Activated CD4-positive, alpha-beta T cell treated with anti-CD3 and anti-CD28 coated beads, Interleukin-2, amount 10 ng/mL, durations not matched to agents 24 days and 14 days (primary cell): ENCODE measurements at regions of chr3 and their contacts with region 1.

Region 1: GRCh38 chr3:106215047-106215446 is 346.2 kb upstream of the CBLB start:
- DNase-seq: peak; percentile 64
- H3K4me3 Mint-ChIP-seq: peak overlapping the region; percentile 3
- H3K27ac Mint-ChIP-seq: peak overlapping the region; percentile 70
- H3K4me1 Mint-ChIP-seq: peaks cover 32% of the 10 kb centered on the region
- H3K27me3 Mint-ChIP-seq: no peaks in the 10 kb centered on the region

Region 2: DNA sequence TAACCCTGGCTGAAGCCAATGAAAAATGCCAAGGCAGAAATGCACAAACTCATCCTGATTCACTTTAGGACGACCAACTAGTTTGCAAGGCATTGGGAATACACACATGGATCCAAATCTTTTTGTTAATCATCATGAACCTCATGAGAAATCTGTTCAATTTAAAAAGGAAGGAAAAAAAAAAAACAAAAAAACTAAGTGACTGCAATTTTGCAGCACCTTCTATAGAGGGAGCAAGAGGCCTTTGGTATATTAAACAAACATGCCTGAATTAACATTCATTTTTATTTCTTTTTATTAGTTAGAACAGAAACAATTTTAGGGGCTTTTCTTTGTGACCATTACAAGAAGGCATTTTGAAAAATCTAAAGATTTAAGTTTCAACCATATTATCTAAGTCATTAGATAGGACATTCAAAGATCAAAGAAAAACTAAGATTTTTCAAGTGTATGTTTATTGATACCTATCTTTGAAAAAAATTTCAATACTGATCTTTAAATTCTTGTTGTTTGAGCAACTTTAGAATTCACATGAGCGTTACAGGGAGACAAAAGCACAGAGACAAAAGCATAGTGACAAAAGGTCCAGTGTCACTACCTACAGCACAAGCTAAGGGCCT is 528.7 kb before region 1 on chr3:
- intact Hi-C with region 1: loop called (anchors 2 kb)
- DNase-seq: peak; percentile 53
- H3K4me3 Mint-ChIP-seq: no peak overlapping the region
- H3K27ac Mint-ChIP-seq: peak overlapping the region; percentile 67
- H3K4me1 Mint-ChIP-seq: peaks cover 18% of the 10 kb centered on the region
- H3K27me3 Mint-ChIP-seq: no peaks in the 10 kb centered on the region

Region 3: GRCh38 chr3:106182950-106183511 is 32.0 kb before region 1 on chr3:
- intact Hi-C with region 1: no loop called
- DNase-seq: no peak
- H3K4me3 Mint-ChIP-seq: no peak overlapping the region
- H3K27ac Mint-ChIP-seq: no peak overlapping the region
- H3K4me1 Mint-ChIP-seq: peaks cover 46% of the 10 kb centered on the region
- H3K27me3 Mint-ChIP-seq: no peaks in the 10 kb centered on the region

Region 4: DNA sequence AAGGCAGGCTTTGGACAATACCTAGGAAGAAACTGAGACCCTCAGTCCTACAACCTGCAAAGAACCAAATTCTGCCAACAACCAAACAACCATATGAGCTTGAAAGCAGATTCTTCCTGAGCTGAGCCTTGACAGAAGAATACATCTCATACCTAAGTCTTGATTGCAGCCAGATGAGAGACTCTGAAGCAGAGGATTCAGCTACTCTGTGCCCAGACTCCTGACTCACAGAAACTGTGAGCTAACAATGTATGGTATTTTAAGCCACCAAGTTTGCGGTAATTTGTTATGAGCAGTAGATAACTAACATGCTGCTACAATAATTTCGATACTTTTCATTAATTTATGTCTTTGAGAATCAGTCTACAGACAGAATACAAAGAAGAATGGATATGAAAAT is 21.2 kb before region 1 on chr3:
- intact Hi-C with region 1: no loop called
- DNase-seq: no peak
- H3K4me3 Mint-ChIP-seq: no peak overlapping the region
- H3K27ac Mint-ChIP-seq: no peak overlapping the region
- H3K4me1 Mint-ChIP-seq: peaks cover 20% of the 10 kb centered on the region
- H3K27me3 Mint-ChIP-seq: no peaks in the 10 kb centered on the region

Region 5: GRCh38 chr3:106232956-106233355 is 17.9 kb after region 1 on chr3:
- intact Hi-C with region 1: loop called (anchors 2 kb)
- DNase-seq: no peak
- H3K4me3 Mint-ChIP-seq: no peak overlapping the region
- H3K27ac Mint-ChIP-seq: no peak overlapping the region
- H3K4me1 Mint-ChIP-seq: peaks cover 42% of the 10 kb centered on the region
- H3K27me3 Mint-ChIP-seq: no peaks in the 10 kb centered on the region

Region 6: DNA sequence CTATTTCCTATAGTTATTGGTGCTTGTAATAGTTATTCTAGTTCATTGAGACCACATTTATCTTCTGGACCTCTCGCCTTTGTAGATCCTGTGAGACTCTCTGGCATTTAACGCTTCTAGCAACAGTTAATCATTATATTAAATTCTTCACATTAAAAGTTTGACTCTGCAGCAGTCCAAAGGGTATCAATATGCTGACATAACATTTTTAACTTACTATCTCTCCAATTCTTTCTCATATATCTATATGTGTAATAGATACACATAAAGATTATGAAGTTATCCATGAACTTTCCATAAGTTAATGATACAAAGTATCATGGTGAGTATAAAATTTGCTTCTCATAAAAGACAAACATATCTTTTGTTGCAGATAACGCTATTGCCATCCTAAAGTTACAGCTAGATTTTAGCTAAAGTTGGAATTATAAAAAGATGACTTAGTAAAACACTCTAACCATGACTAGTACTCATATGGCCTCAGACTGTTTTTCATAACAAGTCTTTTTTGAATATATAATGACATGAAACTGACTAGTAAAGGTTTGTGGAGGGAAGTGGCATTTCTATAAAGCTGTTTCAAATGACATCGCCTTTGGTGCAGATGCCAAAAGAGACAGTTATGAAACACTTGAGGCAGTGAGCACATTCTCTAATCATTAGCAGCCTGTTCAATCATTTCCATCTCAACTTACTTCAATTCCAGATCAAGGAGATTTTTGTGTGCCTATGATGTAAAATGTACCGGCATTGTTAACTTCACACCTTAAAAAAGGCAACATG is 33.0 kb after region 1 on chr3:
- intact Hi-C with region 1: loop called (anchors 5 kb)
- DNase-seq: no peak
- H3K4me3 Mint-ChIP-seq: no peak overlapping the region
- H3K27ac Mint-ChIP-seq: peak overlapping the region; percentile 32
- H3K4me1 Mint-ChIP-seq: peaks cover 16% of the 10 kb centered on the region
- H3K27me3 Mint-ChIP-seq: no peaks in the 10 kb centered on the region

Region 7: DNA sequence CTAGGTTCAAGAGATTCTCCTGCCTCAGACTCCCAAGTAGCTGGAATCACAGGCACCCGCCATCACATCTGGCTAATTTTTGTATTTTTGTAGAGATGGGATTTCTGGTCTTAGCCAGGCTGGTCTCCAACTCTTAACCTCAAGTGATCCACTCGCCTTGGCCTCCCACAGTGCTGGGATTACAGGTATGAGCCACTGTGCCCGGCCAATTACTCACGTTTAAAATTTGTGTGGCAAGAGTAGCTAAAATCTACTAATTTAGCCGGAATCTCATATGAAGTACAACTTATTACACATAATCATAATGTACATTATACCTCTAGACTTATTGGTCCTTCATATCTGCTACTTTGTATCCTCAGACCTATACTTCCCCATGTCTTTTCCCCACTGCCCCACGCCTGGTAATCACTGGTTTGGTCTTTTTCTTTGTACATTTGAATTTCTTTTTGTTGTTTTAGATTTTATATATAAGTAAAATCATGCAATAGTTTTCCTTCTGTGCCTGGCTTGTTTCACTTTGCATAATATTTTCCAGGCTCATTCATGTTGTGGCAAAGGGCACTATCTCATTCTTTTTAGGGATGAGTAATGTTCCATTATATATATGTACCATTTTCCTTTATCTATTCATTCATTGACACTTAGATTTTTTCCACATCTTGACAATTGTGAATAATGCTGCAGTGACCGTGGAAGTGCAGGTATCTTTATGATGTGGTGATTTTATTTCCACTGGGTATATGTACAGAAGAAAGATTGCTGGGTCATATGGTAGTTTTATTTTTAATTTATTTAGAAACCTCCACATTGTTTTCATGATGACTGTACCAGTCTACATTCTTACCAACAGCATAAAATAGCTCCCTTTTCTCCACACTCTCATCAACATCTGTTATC is 258.8 kb after region 1 on chr3:
- intact Hi-C with region 1: loop called (anchors 5 kb)
- DNase-seq: no peak
- H3K4me3 Mint-ChIP-seq: no peak overlapping the region
- H3K27ac Mint-ChIP-seq: peak overlapping the region; percentile 83
- H3K4me1 Mint-ChIP-seq: peaks cover 8% of the 10 kb centered on the region
- H3K27me3 Mint-ChIP-seq: no peaks in the 10 kb centered on the region